Activated CD8-positive, alpha-beta T cell treated with anti-CD3 and anti-CD28 coated beads for 36 hours (primary cell): ENCODE measurements at regions of chr15 and their contacts with region 1.

Region 1: DNA sequence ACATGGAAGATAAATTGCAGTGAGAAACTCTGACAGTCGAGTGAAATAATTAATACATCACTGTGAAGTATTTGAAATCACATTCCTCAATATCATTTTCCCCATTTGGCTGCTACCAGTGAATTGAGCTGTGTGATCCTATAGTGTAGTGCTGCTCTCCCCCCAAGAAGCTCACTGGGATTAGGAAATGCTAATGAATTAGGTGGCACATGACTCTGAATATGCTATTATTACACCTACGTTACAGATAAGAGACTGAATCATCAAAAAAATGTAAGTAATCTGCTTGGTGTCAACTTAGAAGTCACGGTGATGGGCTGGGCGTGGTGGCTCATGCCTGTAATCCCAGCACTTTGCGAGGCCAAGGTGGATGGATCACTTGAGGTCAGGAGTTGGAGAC is 34.7 kb upstream of the SYNM start:
- DNase-seq: no peak
- ATAC-seq: no peak
- H3K4me3 Mint-ChIP-seq: no peak overlapping the region
- H3K27ac Mint-ChIP-seq: no peak overlapping the region
- H3K4me1 Mint-ChIP-seq: no peaks in the 10 kb centered on the region
- H3K27me3 Mint-ChIP-seq: no peaks in the 10 kb centered on the region
- CTCF ChIP-seq: no peak

Region 2: GRCh38 chr15:99059010-99059981 is 10.9 kb before region 1 on chr15:
- CTCF ChIA-PET with region 1: interaction called, 88 read pairs
- POLR2A ChIA-PET with region 1: interaction called, 5 read pairs
- intact Hi-C with region 1: no loop called
- DNase-seq: peak; percentile 39
- ATAC-seq: peak; percentile 89
- H3K4me3 Mint-ChIP-seq: peak overlapping the region; percentile 58
- H3K27ac Mint-ChIP-seq: no peak overlapping the region
- H3K4me1 Mint-ChIP-seq: peaks cover 8% of the 10 kb centered on the region
- H3K27me3 Mint-ChIP-seq: peaks cover 30% of the 10 kb centered on the region
- CTCF ChIP-seq: peak; percentile 76